ENCODE measurements at regions of chr2 and their contacts with region 1.

Region 1: DNA sequence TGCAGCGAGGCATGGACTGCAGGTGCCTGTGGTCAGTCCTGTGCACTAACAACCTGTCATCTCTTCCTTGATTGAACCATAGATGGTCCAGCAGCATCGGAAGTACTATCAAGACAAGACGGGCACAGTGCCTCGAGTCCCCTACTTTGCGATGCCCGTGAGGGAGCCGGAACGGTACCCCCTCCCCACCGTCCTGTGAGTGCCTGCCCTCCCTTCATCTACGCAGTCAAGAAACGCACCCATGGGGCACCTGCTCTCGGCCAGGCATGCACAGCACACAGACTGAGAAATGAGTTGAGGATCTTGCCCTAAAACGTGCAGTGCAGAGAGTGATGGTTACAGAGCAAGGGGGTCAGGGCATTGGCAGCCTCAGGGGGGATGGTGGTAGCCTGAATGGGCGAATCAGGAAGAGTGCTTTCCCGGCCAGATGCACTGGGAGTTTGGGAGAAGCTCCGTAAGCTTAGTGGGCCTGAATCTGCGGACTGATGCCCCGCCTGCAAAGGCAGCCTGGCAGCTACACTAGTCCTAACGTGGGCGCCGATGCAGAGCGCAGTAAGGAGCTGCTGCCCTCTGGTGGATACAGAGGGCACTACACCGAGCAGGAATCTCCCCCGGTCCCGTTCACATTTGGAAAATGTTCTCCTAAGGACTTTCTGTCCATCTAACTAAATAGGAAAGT is 63.6 kb downstream of the CIB4 start:
- DNase-seq: peak; percentile 71
- ATAC-seq: peak; percentile 89
- H3K4me3 Mint-ChIP-seq: no peak overlapping the region
- H3K27ac Mint-ChIP-seq: no peak overlapping the region
- H3K4me1 Mint-ChIP-seq: peaks cover 3% of the 10 kb centered on the region
- H3K27me3 Mint-ChIP-seq: peaks cover 6% of the 10 kb centered on the region

Region 2: GRCh38 chr2:26503231-26503880 is 74.2 kb before region 1 on chr2:
- CTCF ChIA-PET with region 1: interaction called, 41 read pairs
- DNase-seq: peak; percentile 94
- ATAC-seq: peak; percentile 99
- H3K4me3 Mint-ChIP-seq: peak overlapping the region; percentile 69
- H3K27ac Mint-ChIP-seq: peak overlapping the region; percentile 84
- H3K4me1 Mint-ChIP-seq: peaks cover 14% of the 10 kb centered on the region
- H3K27me3 Mint-ChIP-seq: peaks cover 3% of the 10 kb centered on the region

Region 3: DNA sequence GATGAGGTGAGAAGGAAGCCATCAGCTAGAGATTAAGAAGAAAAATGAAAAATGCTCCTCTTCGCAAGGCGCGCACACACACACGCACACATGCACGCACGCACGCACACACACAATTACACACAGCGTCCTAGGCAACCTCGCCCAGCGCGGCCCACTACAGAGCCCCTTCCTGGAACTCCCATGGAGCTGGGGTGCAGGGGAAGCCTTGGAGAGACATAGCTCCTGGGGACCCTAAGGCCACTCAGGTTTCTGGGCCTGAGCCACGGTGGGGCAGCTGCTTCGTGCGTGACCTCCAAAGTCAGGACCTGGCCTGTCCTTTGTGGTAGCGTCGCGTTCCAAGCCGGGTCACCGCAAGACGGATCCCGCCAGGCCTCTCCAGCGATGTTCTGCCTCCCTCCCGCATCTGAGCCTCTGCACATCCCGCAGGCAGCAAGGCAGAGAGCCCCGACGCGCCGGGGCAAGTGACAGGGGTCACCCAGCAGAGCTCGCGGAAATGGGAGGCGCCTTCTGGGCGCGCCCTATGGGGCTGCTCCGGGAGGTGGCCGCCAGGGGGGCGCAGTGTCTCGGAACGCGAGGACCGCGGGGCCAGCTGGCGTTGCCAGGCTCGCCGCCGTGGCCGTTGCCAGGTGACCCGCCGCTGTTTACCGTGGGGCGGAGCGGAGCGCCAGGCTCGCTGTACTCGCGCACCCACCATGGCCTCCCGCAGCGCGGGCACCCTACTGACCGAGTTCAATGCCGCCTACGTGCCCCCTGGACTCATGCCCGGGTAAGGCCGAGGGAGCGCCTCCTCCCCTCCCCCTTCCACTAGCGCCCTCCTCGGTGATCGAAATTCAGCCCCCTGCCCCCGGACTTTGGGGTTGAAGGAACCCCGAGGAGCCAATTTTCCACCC is 15.4 kb before region 1 on chr2:
- CTCF ChIA-PET with region 1: interaction called, 20 read pairs
- DNase-seq: peak; percentile 65
- ATAC-seq: peak; percentile 88
- H3K4me3 Mint-ChIP-seq: no peak overlapping the region
- H3K27ac Mint-ChIP-seq: no peak overlapping the region
- H3K4me1 Mint-ChIP-seq: peaks cover 9% of the 10 kb centered on the region
- H3K27me3 Mint-ChIP-seq: peaks cover 82% of the 10 kb centered on the region

Region 4: GRCh38 chr2:26598336-26598995 is 20.9 kb after region 1 on chr2:
- CTCF ChIA-PET with region 1: interaction called, 11 read pairs
- DNase-seq: no peak
- ATAC-seq: no peak
- H3K4me3 Mint-ChIP-seq: no peak overlapping the region
- H3K27ac Mint-ChIP-seq: no peak overlapping the region
- H3K4me1 Mint-ChIP-seq: peaks cover 3% of the 10 kb centered on the region
- H3K27me3 Mint-ChIP-seq: peaks cover 52% of the 10 kb centered on the region

Region 5: DNA sequence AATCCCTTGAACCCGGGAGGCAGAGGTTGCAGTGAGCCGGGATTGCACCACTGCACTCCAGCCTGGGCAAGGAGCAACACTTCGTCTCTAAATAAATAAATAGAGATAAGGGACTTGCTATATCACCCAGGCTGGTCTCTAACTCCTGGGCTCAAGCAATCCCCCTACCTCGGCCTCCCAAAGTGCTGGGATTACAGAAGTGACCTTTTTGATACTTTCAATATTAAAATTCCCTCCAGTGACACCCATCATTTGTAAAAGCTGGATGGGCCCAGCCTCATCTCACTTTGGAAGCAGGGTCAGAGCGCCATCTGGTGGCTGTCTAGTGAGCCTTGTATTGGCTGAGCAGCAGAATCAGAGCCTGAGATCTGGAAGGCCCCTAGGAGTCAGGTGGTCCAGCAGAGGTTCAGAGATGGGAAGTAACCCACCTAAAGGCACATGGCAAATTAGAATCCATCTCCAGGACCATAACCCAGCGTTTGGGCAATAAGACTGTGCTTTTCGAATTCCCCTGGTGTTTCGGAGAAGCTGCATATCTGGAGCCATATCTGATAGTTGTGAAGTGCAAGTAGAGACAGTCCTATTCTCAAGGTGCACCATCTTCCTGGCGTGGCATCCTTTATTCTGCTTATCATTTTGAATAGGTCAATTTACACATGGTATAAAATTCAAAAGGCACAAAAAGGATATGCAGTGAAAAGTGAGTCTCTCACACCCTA is 168.2 kb after region 1 on chr2:
- CTCF ChIA-PET with region 1: interaction called, 14 read pairs
- DNase-seq: peak; percentile 87
- ATAC-seq: peak; percentile 65
- H3K4me3 Mint-ChIP-seq: no peak overlapping the region
- H3K27ac Mint-ChIP-seq: no peak overlapping the region
- H3K4me1 Mint-ChIP-seq: peaks cover 10% of the 10 kb centered on the region
- H3K27me3 Mint-ChIP-seq: no peaks in the 10 kb centered on the region